ENCODE measurements at regions of chr22 and their contacts with region 1.

Region 1: GRCh38 chr22:30754971-30755756 is 60.5 kb downstream of the OSBP2 start:
- DNase-seq: peak; percentile 72
- H3K4me3 ChIP-seq: no peak overlapping the region
- H3K27ac ChIP-seq: no peak overlapping the region
- H3K4me1 ChIP-seq: no peaks in the 10 kb centered on the region
- H3K27me3 ChIP-seq: no peaks in the 10 kb centered on the region
- CTCF ChIP-seq: peak; percentile 81 to 82
- POLR2A ChIP-seq: no peak

Region 2: DNA sequence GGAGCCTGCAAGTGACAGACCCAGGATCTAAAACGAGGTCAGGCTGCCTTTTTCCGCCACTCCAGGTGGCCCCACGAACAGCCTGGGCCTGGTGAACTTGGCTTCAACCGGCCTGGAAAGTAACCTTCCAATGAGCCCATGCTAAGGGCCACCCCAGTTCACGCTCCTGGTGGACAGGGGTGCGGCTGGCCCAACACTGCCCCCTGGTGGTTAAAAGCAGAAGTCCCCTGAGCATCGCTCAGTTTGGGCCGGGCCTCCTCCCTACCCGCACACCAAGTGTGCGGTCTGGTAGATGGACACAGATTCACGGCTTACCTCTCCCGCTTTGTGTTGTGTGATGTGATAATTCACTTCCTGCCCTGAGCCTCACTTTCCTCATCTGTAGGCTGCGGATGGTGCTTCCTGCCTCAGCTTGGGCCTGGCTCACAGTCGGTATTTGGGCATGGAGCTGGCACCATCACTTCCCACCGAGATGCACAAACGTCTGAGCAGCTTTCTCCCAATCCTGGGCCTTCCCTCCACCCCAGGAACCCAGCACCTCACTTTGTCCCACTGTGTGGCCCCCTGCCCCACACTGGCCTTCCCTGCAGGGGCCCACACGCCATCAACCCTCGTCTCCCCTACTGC is 269.7 kb before region 1 on chr22:
- CTCF ChIA-PET with region 1: interaction called, 3 read pairs
- POLR2A ChIA-PET with region 1: no interaction called
- dilution Hi-C with region 1: no loop called
- intact Hi-C with region 1: loop called (anchors 1 kb)
- DNase-seq: peak; percentile 59
- H3K4me3 ChIP-seq: no peak overlapping the region
- H3K27ac ChIP-seq: no peak overlapping the region
- H3K4me1 ChIP-seq: no peaks in the 10 kb centered on the region
- H3K27me3 ChIP-seq: no peaks in the 10 kb centered on the region
- CTCF ChIP-seq: peak; percentile 86 to 93
- POLR2A ChIP-seq: no peak

Region 3: GRCh38 chr22:30523776-30524489 is 231.2 kb before region 1 on chr22:
- CTCF ChIA-PET with region 1: no interaction called
- POLR2A ChIA-PET with region 1: no interaction called
- dilution Hi-C with region 1: no loop called
- intact Hi-C with region 1: no loop called
- DNase-seq: no peak
- H3K4me3 ChIP-seq: no peak overlapping the region
- H3K27ac ChIP-seq: no peak overlapping the region
- H3K4me1 ChIP-seq: no peaks in the 10 kb centered on the region
- H3K27me3 ChIP-seq: peaks cover 2 to 9% of the 10 kb centered on the region in 2 experiments
- CTCF ChIP-seq: no peak
- POLR2A ChIP-seq: no peak

Region 4: GRCh38 chr22:30628491-30628890 is 126.7 kb before region 1 on chr22:
- CTCF ChIA-PET with region 1: interaction called, 486 read pairs
- POLR2A ChIA-PET with region 1: no interaction called
- dilution Hi-C with region 1: no loop called
- intact Hi-C with region 1: no loop called
- DNase-seq: no peak
- H3K4me3 ChIP-seq: no peak overlapping the region
- H3K27ac ChIP-seq: no peak overlapping the region
- H3K4me1 ChIP-seq: peaks cover 19% of the 10 kb centered on the region
- H3K27me3 ChIP-seq: no peaks in the 10 kb centered on the region
- CTCF ChIP-seq: no peak
- POLR2A ChIP-seq: no peak

Region 5: DNA sequence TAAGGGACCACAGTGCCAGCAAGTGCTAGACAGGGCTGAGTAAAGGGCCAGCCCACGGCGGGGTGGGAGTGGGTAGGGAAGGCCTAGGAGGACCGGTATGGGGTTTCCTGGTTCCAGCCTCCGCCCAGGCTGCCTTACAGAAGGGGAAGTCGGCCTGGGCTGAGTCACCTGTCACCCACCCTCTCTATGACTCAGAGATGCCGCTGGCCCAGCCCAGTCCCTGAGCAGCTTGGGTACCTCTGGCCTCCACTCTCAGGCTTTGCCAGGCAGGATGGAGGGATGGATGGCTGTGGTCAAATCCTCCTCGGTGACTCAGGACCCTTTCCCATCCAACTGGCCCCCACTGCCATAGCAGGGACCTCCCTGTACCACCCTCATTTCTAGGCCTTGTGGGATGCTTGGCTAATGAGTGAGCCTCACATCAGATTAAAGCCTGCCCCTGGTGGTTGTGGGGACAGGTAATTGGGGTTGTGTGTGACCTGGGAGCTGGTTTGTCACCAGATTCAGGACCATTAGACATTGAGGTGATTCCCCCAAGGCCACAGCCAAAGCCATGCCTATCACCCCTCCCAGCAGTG is 105.6 kb before region 1 on chr22:
- CTCF ChIA-PET with region 1: interaction called, 32 read pairs
- POLR2A ChIA-PET with region 1: no interaction called
- dilution Hi-C with region 1: no loop called
- intact Hi-C with region 1: no loop called
- DNase-seq: peak; percentile 66
- H3K4me3 ChIP-seq: no peak overlapping the region
- H3K27ac ChIP-seq: peak overlapping the region; percentile 51
- H3K4me1 ChIP-seq: peaks cover 11% of the 10 kb centered on the region
- H3K27me3 ChIP-seq: no peaks in the 10 kb centered on the region
- CTCF ChIP-seq: no peak
- POLR2A ChIP-seq: no peak

Region 6: DNA sequence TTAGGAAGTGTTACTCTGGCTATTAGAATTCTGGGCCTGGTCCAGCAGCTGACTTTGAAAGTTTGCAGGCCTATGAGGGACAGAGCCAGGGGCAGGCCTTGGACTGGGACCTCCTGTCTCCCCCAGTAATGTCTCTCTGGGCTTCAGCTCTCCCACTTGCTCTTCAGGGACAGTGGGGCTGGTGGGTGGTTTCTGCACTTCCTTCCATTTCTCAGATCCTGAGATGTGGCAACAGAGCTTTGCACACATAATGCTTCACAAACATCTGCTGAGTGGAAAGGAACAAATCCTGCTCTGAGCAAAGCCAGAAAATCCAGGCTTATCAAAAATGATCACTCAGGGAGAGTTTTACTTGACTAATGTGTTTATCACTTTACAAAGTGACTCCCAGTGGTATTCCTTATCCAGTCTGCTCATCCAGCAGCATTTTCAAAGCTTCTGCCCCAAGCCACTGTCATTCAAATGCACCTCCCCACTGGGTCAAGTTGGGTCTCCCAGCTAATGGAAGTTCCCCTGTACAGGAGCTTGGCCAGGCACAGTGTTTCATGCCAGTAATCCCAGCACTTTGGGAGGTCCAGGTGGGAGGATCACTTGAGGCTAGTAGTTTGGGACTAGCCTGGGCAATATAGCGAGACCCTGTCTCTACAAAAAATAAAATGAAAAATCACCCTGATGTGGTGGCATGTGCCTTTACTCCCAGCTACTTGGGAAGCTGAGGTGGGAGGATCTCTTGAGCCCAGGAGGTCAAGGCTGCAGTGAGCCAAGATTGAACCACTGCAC is 74.0 kb before region 1 on chr22:
- CTCF ChIA-PET with region 1: interaction called, 19 read pairs
- POLR2A ChIA-PET with region 1: no interaction called
- dilution Hi-C with region 1: no loop called
- intact Hi-C with region 1: no loop called
- DNase-seq: no peak
- H3K4me3 ChIP-seq: no peak overlapping the region
- H3K27ac ChIP-seq: no peak overlapping the region
- H3K4me1 ChIP-seq: no peaks in the 10 kb centered on the region
- H3K27me3 ChIP-seq: no peaks in the 10 kb centered on the region
- CTCF ChIP-seq: no peak
- POLR2A ChIP-seq: no peak

Region 7: DNA sequence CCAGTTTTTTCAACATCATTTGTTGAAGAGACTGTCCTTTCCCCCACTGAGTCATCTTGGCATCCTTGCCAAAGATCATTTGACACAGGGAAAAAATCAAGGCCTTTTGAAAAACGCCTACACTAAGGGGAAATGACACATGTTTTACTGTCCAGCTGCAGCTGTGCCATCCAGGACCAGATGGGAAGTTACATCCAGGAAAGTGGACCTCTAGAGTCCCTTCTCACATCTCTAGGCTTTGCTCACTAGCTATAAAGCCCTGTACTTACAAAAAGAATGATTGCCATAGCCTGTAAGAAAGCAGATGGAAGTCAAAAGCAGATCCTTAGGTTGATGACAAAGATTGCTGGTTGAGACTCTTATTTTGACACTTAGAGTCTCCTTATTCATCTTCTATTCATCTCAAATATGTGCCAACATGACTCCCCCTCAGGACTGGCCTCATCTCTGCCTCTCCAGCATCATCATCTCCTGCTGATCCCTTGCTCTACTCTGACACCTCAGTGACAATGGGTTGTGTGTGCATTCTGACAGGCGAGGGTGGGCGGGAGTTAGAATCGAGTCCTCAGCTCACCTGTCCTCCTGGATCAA is 37.7 kb before region 1 on chr22:
- CTCF ChIA-PET with region 1: interaction called, 10 read pairs
- POLR2A ChIA-PET with region 1: no interaction called
- dilution Hi-C with region 1: no loop called
- intact Hi-C with region 1: no loop called
- DNase-seq: peak; percentile 89
- H3K4me3 ChIP-seq: no peak overlapping the region
- H3K27ac ChIP-seq: peak overlapping the region; percentile 39
- H3K4me1 ChIP-seq: peaks cover 13% of the 10 kb centered on the region
- H3K27me3 ChIP-seq: no peaks in the 10 kb centered on the region
- CTCF ChIP-seq: no peak
- POLR2A ChIP-seq: no peak

Measured in endothelial cell of umbilical vein (primary cell).